ENCODE measurements at regions of chr6 and their contacts with region 1.

Region 1: DNA sequence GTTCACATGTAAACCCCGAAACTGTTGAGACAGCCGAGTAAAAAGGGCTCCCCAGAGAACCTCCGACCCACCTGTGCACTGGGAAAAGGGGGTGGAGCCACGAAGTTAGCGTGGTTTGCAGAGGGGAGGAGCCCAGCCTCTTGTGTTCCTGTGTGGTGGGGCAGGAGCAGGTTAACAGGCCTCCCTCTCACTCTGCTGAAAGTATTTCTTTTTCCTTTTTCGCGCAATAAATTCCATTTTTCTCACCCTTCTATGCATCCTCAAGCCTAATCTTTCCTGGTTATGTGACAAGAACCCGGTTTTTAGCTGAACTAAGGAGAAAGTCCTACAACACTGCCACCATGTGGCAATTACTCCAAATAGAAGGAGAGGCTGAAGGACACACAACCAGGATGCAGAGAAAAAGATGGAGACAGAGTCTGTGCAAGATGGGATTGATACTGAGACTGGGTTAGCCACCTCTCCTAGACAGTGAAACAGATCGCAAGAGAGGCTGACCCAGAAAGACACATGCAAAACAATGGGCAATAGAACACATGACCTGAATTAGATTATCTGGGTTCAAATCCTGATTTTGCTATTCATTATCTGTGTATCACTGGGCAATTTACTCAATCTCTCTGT is 168.7 kb upstream of the PRSS16 start:
- DNase-seq: peak; percentile 78
- H3K4me3 ChIP-seq: peak overlapping the region; percentile 39
- H3K27ac ChIP-seq: no peak overlapping the region
- H3K4me1 ChIP-seq: no peaks in the 10 kb centered on the region
- H3K27me3 ChIP-seq: no peaks in the 10 kb centered on the region
- CTCF ChIP-seq: peak; percentile 87

Region 2: GRCh38 chr6:26607434-26608230 is 471.2 kb before region 1 on chr6:
- CTCF ChIA-PET with region 1: no interaction called
- POLR2A ChIA-PET with region 1: no interaction called
- intact Hi-C with region 1: loop called (anchors 1 kb)
- DNase-seq: peak; percentile 75
- H3K4me3 ChIP-seq: peak overlapping the region; percentile 25
- H3K27ac ChIP-seq: no peak overlapping the region
- H3K4me1 ChIP-seq: no peaks in the 10 kb centered on the region
- H3K27me3 ChIP-seq: peaks cover 2% of the 10 kb centered on the region
- CTCF ChIP-seq: peak; percentile 82

Region 3: DNA sequence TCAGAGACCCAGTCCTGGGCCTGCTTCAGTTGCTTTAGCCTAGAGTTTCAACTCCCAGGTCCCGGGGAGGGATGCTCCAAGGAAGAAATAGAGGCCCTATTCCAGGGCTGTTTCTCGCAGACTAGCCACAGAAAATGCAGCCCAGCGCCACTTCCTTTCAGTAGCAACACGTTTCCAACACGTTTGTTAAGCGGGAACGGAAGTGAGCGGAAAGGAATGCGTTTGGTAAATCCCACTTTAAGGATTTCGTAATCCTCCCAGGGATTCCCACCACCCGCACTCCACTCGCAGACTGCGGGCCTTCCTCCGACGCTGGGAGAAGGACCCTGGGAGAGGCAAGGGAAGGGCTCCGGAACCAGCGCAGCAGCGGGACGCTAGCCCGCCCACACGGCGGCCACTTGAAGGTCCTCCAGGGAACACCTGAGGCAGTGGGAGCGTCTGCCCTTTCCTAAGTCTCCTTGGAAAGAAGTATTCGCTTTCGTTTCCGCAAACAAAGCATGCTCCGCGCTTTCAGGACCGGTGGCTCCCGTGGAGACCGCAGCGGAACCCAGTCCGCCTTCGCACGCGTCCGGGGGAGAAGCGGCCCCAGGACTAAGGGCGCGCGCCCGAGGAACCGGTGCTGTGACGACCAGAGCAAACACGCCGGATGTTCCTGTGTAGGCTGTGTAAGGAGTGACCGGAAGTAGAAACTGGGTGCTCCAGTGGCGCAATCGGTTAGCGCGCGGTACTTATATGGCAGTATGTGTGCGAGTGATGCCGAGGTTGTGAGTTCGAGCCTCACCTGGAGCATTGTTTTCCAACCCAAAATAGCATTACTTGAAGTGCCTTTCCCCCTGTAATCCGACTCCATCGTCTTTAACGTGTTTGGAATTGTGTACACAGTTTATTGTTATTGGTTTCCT is 58.9 kb before region 1 on chr6:
- CTCF ChIA-PET with region 1: no interaction called
- POLR2A ChIA-PET with region 1: no interaction called
- intact Hi-C with region 1: no loop called
- DNase-seq: peak; percentile 78
- H3K4me3 ChIP-seq: peak overlapping the region; percentile 53
- H3K27ac ChIP-seq: peak overlapping the region; percentile 60
- H3K4me1 ChIP-seq: peaks cover 3% of the 10 kb centered on the region
- H3K27me3 ChIP-seq: no peaks in the 10 kb centered on the region
- CTCF ChIP-seq: no peak

Measured in A673 (cell line).